Aorta (tissue), 5 donors: ENCODE measurements at regions of chr3 and their contacts with region 1.

Region 1: GRCh38 chr3:149473357-149474249 is 894 bp upstream of the TM4SF4 start:
- DNase-seq: peak in 1 of 2 donors; percentile 68
- ATAC-seq: peak; percentile 69
- H3K4me3 ChIP-seq: no peak overlapping the region
- H3K27ac ChIP-seq: peak overlapping the region; percentile 18 to 92
- H3K4me1 ChIP-seq: peaks cover 3 to 11% of the 10 kb centered on the region in 2 donors
- H3K27me3 ChIP-seq: no peaks in the 10 kb centered on the region

Region 2: GRCh38 chr3:149129326-149130205 is 344.0 kb before region 1 on chr3 and contains the start of gene HPS3:
- intact Hi-C with region 1: loop called in 1 of 2 experiments (anchors 10 kb)
- DNase-seq: peak; percentile 96 to 98
- ATAC-seq: peak; percentile 98
- H3K4me3 ChIP-seq: peak within 1 kb of the TSS; percentile 65 to 86
- H3K27ac ChIP-seq: peak within 1 kb of the TSS; percentile 19 to 82
- H3K4me1 ChIP-seq: peaks cover 0 to 5% of the 10 kb centered on the region in 2 donors
- H3K27me3 ChIP-seq: no peaks in the 10 kb centered on the region
- total RNA-seq, gene HPS3: 17.0 to 32.2 TPM

Region 3: GRCh38 chr3:149401215-149401925 is 72.2 kb before region 1 on chr3:
- intact Hi-C with region 1: loop called in 1 of 2 experiments (anchors 2 kb)
- DNase-seq: no peak
- ATAC-seq: peak; percentile 71
- H3K4me3 ChIP-seq: no peak overlapping the region
- H3K27ac ChIP-seq: peak overlapping the region; percentile 7 to 93
- H3K4me1 ChIP-seq: peaks cover 0 to 8% of the 10 kb centered on the region in 2 donors
- H3K27me3 ChIP-seq: no peaks in the 10 kb centered on the region

Region 4: DNA sequence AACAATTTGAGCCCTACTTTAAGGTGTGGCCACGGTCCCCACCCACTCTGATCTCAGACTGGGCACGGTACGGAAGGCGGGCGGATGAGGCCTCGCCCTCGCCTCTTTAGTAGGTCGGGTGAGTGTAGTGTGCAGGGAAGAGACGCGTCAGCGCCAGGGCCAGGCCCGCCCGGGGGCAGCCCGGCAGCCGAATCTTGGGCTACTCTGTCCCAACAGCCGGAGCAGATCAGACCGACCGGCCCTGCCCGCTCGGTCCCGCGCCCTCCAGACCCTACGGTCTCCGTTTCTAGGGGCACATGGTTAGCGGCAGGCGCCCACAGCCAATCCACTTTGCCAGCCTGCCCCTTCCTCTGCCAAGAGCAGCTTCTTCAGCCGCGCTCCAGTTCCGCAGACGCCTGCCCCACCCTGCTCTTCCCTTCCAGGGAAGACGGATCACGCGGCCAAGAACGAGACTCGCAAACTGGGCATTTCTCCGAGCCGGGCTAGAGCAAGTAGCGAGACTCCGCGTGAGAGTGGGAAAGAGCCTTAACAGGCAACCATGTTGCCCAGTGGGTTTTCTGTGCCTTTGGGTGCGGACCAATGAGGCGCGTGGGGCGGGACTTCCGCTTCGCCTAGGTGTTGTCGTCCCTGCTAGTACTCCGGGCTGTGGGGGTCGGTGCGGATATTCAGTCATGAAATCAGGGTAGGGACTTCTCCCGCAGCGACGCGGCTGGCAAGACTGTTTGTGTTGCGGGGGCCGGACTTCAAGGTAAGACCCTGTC is 339.2 kb after region 1 on chr3 and contains the start of gene RNF13:
- intact Hi-C with region 1: no loop called
- DNase-seq: peak; percentile 99
- ATAC-seq: peak; percentile 97
- H3K4me3 ChIP-seq: peak within 1 kb of the TSS; percentile 46 to 90
- H3K27ac ChIP-seq: peak within 1 kb of the TSS; percentile 83 to 89
- H3K4me1 ChIP-seq: peaks cover 0 to 3% of the 10 kb centered on the region in 2 donors
- H3K27me3 ChIP-seq: no peaks in the 10 kb centered on the region
- total RNA-seq, gene RNF13: 66.3 to 85.8 TPM

Region 5: GRCh38 chr3:150371741-150372254 is 898.2 kb after region 1 on chr3:
- intact Hi-C with region 1: no loop called
- DNase-seq: no peak
- ATAC-seq: peak; percentile 93
- H3K4me3 ChIP-seq: peak overlapping the region in 1 of 2 donors; percentile 34
- H3K27ac ChIP-seq: peak overlapping the region; percentile 82 to 84
- H3K4me1 ChIP-seq: no peaks in the 10 kb centered on the region
- H3K27me3 ChIP-seq: no peaks in the 10 kb centered on the region